B cell (primary cell): ENCODE measurements at regions of chr1 and their contacts with region 1.

Region 1: GRCh38 chr1:55318116-55318817 is 103.1 kb upstream of the USP24 start:
- DNase-seq: no peak
- ATAC-seq: no peak
- H3K4me3 ChIP-seq: no peak overlapping the region
- H3K4me3 Mint-ChIP-seq: no peak overlapping the region
- H3K27ac ChIP-seq: no peak overlapping the region
- H3K27ac Mint-ChIP-seq: no peak overlapping the region
- H3K4me1 ChIP-seq: no peaks in the 10 kb centered on the region
- H3K4me1 Mint-ChIP-seq: peaks cover 4% of the 10 kb centered on the region
- H3K27me3 ChIP-seq: peaks cover 0 to 13% (median 3%) of the 10 kb centered on the region in 4 experiments
- H3K27me3 Mint-ChIP-seq: peaks cover 6% of the 10 kb centered on the region
- CTCF ChIP-seq: no peak

Region 2: GRCh38 chr1:55337801-55338447 is 19.7 kb after region 1 on chr1:
- CTCF ChIA-PET with region 1: interaction called, 11 read pairs
- POLR2A ChIA-PET with region 1: no interaction called
- intact Hi-C with region 1: no loop called
- DNase-seq: peak; percentile 34
- ATAC-seq: no peak
- H3K4me3 ChIP-seq: no peak overlapping the region
- H3K4me3 Mint-ChIP-seq: no peak overlapping the region
- H3K27ac ChIP-seq: no peak overlapping the region
- H3K27ac Mint-ChIP-seq: no peak overlapping the region
- H3K4me1 ChIP-seq: no peaks in the 10 kb centered on the region
- H3K4me1 Mint-ChIP-seq: peaks cover 3% of the 10 kb centered on the region
- H3K27me3 ChIP-seq: no peaks in the 10 kb centered on the region
- H3K27me3 Mint-ChIP-seq: peaks cover 11% of the 10 kb centered on the region
- CTCF ChIP-seq: peak; percentile 40